ENCODE measurements at regions of chr1 and their contacts with region 1.

Region 1: GRCh38 chr1:42165511-42166163 is 1.1 kb upstream of the GUCA2A start:
- DNase-seq: peak; percentile 96 to 98
- H3K4me3 ChIP-seq: no peak overlapping the region
- H3K27ac ChIP-seq: peak overlapping the region in 1 of 3 donors; percentile 65
- H3K4me1 ChIP-seq: peaks cover 12 to 36% of the 10 kb centered on the region in 2 donors
- H3K27me3 ChIP-seq: no peaks in the 10 kb centered on the region
- CTCF ChIP-seq: no peak
- POLR2A ChIP-seq: no peak

Region 2: GRCh38 chr1:41580520-41581172 is 585.0 kb before region 1 on chr1:
- intact Hi-C with region 1: loop called (anchors 10 kb)
- DNase-seq: no peak
- H3K4me3 ChIP-seq: no peak overlapping the region
- H3K27ac ChIP-seq: no peak overlapping the region
- H3K4me1 ChIP-seq: peaks cover 8 to 13% of the 10 kb centered on the region in 2 donors
- H3K27me3 ChIP-seq: no peaks in the 10 kb centered on the region
- CTCF ChIP-seq: no peak
- POLR2A ChIP-seq: no peak

Region 3: GRCh38 chr1:42209621-42210251 is 44.1 kb after region 1 on chr1:
- intact Hi-C with region 1: no loop called
- DNase-seq: no peak
- H3K4me3 ChIP-seq: no peak overlapping the region
- H3K27ac ChIP-seq: no peak overlapping the region
- H3K4me1 ChIP-seq: peaks cover 8 to 23% of the 10 kb centered on the region in 2 donors
- H3K27me3 ChIP-seq: no peaks in the 10 kb centered on the region
- CTCF ChIP-seq: no peak
- POLR2A ChIP-seq: no peak

Measured in thyroid gland (tissue), 4 donors.